B cell (primary cell): ENCODE measurements at regions of chr15 and their contacts with region 1.

Region 1: DNA sequence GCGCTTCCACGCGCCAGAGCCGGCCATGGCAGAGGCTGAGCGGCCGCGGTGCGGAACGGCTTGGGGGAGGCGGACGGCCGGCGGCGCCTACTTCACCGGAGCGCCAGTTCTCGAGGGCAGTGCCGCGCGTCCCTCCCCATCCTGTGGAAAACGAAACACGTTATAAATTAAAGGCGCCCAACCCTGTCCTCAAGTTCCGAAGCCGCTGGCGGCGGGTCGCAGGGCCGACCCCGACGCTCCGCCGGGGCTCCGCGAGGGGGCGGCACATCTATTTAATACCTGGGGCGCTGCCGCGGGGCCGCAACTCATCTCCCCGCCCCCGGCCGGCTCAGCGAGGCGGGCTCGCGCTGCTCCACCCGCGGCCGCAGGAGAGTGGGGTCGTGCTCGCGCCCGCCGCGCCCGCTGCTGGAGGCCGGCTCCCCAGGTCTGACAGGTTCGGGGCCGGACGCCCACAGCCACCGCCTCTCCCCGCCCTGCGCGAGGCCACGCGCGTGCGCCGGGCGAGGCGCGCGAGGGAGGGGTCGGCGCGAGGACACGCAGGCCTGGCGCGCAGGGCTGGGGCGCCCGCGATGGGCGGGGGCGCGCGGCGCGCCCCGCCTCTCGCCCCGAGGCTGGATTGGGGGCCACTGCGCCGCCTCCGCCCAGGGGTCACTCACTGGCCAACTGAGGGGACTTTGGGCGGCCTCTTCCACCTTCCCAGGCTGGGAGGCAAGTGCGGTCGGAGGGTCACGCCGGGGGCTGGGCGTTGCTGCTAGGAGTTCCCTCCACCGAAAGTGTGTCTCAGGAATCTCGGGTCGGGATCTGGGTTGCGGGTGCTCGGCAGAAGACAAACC is at the start of gene SLC30A4:
- DNase-seq: peak; percentile 86
- ATAC-seq: peak; percentile 81
- H3K4me3 ChIP-seq: peak within 1 kb of the TSS; percentile 60 to 95 (median 73)
- H3K4me3 Mint-ChIP-seq: peak within 1 kb of the TSS; percentile 94
- H3K27ac ChIP-seq: peak within 1 kb of the TSS; percentile 26 to 64
- H3K27ac Mint-ChIP-seq: peak within 1 kb of the TSS; percentile 92
- H3K4me1 ChIP-seq: peaks cover 26 to 32% of the 10 kb centered on the region in 2 donors
- H3K4me1 Mint-ChIP-seq: peaks cover 43% of the 10 kb centered on the region
- H3K27me3 ChIP-seq: no peaks in the 10 kb centered on the region
- H3K27me3 Mint-ChIP-seq: no peaks in the 10 kb centered on the region
- CTCF ChIP-seq: peak; percentile 71
- total RNA-seq, gene SLC30A4: 9.1 and 11.0 TPM in 2 replicates

Region 2: GRCh38 chr15:45429974-45430792 is 92.4 kb before region 1 on chr15:
- CTCF ChIA-PET with region 1: no interaction called
- POLR2A ChIA-PET with region 1: no interaction called
- intact Hi-C with region 1: loop called (anchors 1 kb)
- DNase-seq: peak; percentile 89
- ATAC-seq: peak; percentile 90
- H3K4me3 ChIP-seq: peak overlapping the region in 4 of 5 experiments; percentile 27 to 55 (median 51)
- H3K4me3 Mint-ChIP-seq: peak overlapping the region; percentile 67
- H3K27ac ChIP-seq: no peak overlapping the region
- H3K27ac Mint-ChIP-seq: no peak overlapping the region
- H3K4me1 ChIP-seq: peaks cover 4 to 8% of the 10 kb centered on the region in 2 donors
- H3K4me1 Mint-ChIP-seq: peaks cover 2% of the 10 kb centered on the region
- H3K27me3 ChIP-seq: peaks cover 0 to 10% (median 1%) of the 10 kb centered on the region in 4 experiments
- H3K27me3 Mint-ChIP-seq: peaks cover 6% of the 10 kb centered on the region
- CTCF ChIP-seq: peak; percentile 100

Region 3: DNA sequence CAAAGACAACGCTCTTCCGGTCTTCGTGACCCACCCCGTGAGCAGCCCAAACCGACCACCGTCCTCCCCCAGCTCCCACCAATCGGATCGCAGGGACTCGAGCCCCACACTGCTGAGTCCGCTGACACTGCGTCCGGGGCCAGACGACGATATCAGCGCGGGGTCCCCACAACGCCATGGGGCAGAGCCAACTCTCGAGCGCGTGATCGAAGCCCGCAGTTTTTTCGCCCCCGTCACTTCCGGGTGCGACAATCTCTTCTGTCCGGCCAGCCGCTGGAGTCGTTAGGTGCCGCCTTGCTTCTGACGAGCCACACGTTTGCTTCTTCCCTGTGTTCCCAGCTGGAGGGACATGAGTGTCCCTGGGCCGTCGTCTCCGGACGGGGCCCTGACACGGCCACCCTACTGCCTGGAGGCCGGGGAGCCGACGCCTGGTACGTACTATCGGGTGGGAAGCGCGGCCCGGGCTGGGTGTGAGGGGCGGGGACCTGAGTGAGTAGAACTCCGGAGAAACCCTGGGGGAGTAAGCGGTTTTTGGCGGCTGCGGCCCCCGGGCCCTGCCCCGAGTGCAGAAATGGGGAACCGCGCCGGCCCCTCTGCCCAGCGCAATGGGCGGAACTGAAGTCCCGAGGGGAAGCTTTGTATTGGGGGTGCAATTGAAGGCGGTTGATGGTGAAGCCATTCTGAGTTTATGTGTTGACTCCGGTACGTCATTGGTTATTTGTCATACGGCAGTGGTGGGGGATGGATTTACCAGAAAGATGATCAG is 64.7 kb after region 1 on chr15 and contains the start of gene BLOC1S6:
- CTCF ChIA-PET with region 1: interaction called, 9 read pairs
- POLR2A ChIA-PET with region 1: interaction called, 18 read pairs
- intact Hi-C with region 1: loop called (anchors 1 kb)
- DNase-seq: peak; percentile 99
- ATAC-seq: peak; percentile 86
- H3K4me3 ChIP-seq: peak within 1 kb of the TSS; percentile 64 to 98 (median 89)
- H3K4me3 Mint-ChIP-seq: peak within 1 kb of the TSS; percentile 100
- H3K27ac ChIP-seq: peak within 1 kb of the TSS; percentile 98 to 99
- H3K27ac Mint-ChIP-seq: peak within 1 kb of the TSS; percentile 100
- H3K4me1 ChIP-seq: peaks cover 22 to 29% of the 10 kb centered on the region in 2 donors
- H3K4me1 Mint-ChIP-seq: peaks cover 46% of the 10 kb centered on the region
- H3K27me3 ChIP-seq: no peaks in the 10 kb centered on the region
- H3K27me3 Mint-ChIP-seq: no peaks in the 10 kb centered on the region
- CTCF ChIP-seq: no peak
- total RNA-seq, gene BLOC1S6: 51.3 and 60.8 TPM in 2 replicates

Region 4: DNA sequence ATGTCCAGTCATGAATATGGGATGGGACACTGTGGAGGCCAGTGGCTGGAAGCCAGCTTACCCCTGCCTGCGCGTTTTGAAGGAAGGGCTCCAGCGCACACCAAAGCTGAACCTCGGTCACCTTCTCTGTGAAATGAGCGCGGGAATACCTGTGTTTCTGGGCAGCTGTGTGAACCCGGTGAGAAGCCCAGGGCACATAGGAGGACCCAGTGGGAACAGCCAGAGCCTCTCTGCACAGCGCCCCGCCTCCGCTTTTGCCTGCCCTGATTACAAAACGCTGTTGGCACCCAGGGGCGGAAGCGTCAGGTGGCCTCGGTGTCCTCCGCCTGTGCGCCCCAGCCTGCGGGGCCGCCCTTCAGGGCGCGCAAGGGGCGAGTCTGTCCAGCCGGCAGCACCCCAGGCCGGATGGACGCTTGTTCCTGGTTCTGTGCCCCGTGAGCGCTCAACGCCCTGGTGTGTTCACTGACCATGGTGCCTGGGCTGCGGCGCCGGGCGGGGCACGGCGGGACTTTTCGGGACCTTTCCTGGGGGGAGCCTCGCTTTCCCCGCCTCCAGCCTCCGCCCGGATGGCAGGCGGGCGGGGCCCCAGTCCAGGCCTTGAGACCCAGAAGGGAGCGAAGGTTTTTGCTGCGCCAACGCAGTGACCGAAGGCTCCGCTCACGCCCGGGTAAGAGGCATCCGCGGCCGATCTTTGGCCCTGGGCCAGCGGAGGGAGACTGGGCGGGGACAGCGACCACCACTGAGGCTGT is 112.1 kb after region 1 on chr15 and contains the start of gene SQOR:
- CTCF ChIA-PET with region 1: interaction called, 3 read pairs
- POLR2A ChIA-PET with region 1: no interaction called
- intact Hi-C with region 1: loop called (anchors 1 kb)
- DNase-seq: peak; percentile 79
- ATAC-seq: peak; percentile 74
- H3K4me3 ChIP-seq: peak within 1 kb of the TSS; percentile 81 to 91 (median 86)
- H3K4me3 Mint-ChIP-seq: peak within 1 kb of the TSS; percentile 99
- H3K27ac ChIP-seq: peak within 1 kb of the TSS; percentile 69 to 78
- H3K27ac Mint-ChIP-seq: peak within 1 kb of the TSS; percentile 97
- H3K4me1 ChIP-seq: peaks cover 30 to 36% of the 10 kb centered on the region in 2 donors
- H3K4me1 Mint-ChIP-seq: peaks cover 39% of the 10 kb centered on the region
- H3K27me3 ChIP-seq: no peaks in the 10 kb centered on the region
- H3K27me3 Mint-ChIP-seq: no peaks in the 10 kb centered on the region
- CTCF ChIP-seq: no peak
- total RNA-seq, gene SQOR: 24.3 and 25.6 TPM in 2 replicates

Region 5: GRCh38 chr15:45660231-45660979 is 137.9 kb after region 1 on chr15:
- CTCF ChIA-PET with region 1: no interaction called
- POLR2A ChIA-PET with region 1: no interaction called
- intact Hi-C with region 1: no loop called
- DNase-seq: no peak
- ATAC-seq: no peak
- H3K4me3 ChIP-seq: no peak overlapping the region
- H3K4me3 Mint-ChIP-seq: no peak overlapping the region
- H3K27ac ChIP-seq: no peak overlapping the region
- H3K27ac Mint-ChIP-seq: no peak overlapping the region
- H3K4me1 ChIP-seq: no peaks in the 10 kb centered on the region
- H3K4me1 Mint-ChIP-seq: peaks cover 4% of the 10 kb centered on the region
- H3K27me3 ChIP-seq: no peaks in the 10 kb centered on the region
- H3K27me3 Mint-ChIP-seq: no peaks in the 10 kb centered on the region
- CTCF ChIP-seq: no peak

Region 6: DNA sequence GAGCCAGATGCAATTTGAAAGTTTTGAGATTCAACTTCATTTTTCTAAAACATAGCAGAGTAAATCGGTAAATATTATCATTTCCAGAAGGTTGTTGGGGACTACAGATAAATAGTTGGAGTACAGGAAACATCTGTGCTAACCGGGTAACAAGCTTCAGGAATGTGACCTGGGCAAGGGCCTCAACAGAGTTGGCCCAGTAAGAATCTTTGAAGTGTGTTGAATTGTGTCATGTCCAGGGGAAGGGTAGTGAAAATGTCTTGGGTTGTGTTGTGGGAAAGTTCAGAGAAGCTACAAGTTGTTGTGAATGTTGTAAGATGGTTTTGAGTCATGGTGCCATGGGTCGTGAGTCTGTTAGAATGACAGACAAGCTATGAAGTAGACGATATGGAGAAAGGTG is 148.0 kb after region 1 on chr15:
- CTCF ChIA-PET with region 1: no interaction called
- POLR2A ChIA-PET with region 1: no interaction called
- intact Hi-C with region 1: no loop called
- DNase-seq: no peak
- ATAC-seq: no peak
- H3K4me3 ChIP-seq: no peak overlapping the region
- H3K4me3 Mint-ChIP-seq: no peak overlapping the region
- H3K27ac ChIP-seq: no peak overlapping the region
- H3K27ac Mint-ChIP-seq: no peak overlapping the region
- H3K4me1 ChIP-seq: no peaks in the 10 kb centered on the region
- H3K4me1 Mint-ChIP-seq: no peaks in the 10 kb centered on the region
- H3K27me3 ChIP-seq: no peaks in the 10 kb centered on the region
- H3K27me3 Mint-ChIP-seq: no peaks in the 10 kb centered on the region
- CTCF ChIP-seq: no peak

Region 7: GRCh38 chr15:45705510-45706473 is 183.2 kb after region 1 on chr15:
- CTCF ChIA-PET with region 1: interaction called, 3 read pairs
- POLR2A ChIA-PET with region 1: no interaction called
- intact Hi-C with region 1: loop called (anchors 1 kb)
- DNase-seq: peak; percentile 82
- ATAC-seq: peak; percentile 89
- H3K4me3 ChIP-seq: peak overlapping the region; percentile 48 to 84 (median 79)
- H3K4me3 Mint-ChIP-seq: peak overlapping the region; percentile 93
- H3K27ac ChIP-seq: peak overlapping the region in 1 of 2 donors; percentile 21
- H3K27ac Mint-ChIP-seq: no peak overlapping the region
- H3K4me1 ChIP-seq: peaks cover 10 to 12% of the 10 kb centered on the region in 2 donors
- H3K4me1 Mint-ChIP-seq: peaks cover 14% of the 10 kb centered on the region
- H3K27me3 ChIP-seq: peaks cover 0 to 17% (median 7%) of the 10 kb centered on the region in 4 experiments
- H3K27me3 Mint-ChIP-seq: peaks cover 8% of the 10 kb centered on the region
- CTCF ChIP-seq: peak; percentile 98